Activated CD4-positive, alpha-beta T cell treated with anti-CD3 and anti-CD28 coated beads, Interleukin-2, amount 10 ng/mL, durations not matched to agents 7 days and 5 days (primary cell): ENCODE measurements at regions of chr12 and their contacts with region 1.

Region 1: GRCh38 chr12:121590476-121591143 is 9.8 kb upstream of the KDM2B start:
- DNase-seq: peak; percentile 79
- H3K4me3 Mint-ChIP-seq: peak overlapping the region; percentile 73
- H3K27ac Mint-ChIP-seq: peak overlapping the region; percentile 99
- H3K4me1 Mint-ChIP-seq: peaks cover 42% of the 10 kb centered on the region
- H3K27me3 Mint-ChIP-seq: no peaks in the 10 kb centered on the region

Region 2: DNA sequence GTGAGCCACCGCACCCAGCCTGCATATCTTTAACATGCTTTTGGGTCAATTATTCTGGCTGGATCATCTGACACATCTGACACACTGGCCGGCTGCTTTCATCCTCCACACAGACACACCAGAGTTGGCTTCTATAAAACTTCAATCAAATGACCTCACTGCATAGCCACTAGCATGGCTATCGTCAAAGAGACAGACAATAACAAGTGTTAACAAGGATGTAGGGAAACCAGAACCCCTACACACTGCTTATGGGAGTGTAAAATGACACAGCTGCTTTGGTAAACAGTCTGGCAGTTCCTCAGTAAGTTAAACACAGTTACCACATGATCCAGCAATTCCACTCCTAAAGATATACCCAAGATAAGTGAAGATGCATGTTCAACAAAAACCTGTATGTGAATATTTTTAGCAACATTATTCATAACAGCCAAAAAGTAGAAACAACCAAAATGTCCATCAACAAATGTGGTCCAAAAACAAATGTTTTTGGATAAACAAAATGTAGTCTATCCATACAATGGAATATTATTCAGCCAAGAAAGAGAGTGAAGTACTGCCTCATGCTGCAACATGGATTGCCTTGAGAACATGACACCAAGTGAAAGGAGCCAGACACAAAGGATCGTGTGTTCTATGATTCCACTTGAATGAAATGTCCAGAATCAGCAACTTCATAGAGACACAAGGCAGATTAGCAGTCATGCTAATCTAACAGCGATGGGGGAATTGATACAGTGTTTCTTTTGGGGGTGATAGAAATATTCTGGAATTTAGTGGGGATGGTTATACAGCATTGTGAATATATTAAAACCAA is 19.9 kb before region 1 on chr12:
- CTCF ChIA-PET with region 1: no interaction called
- POLR2A ChIA-PET with region 1: no interaction called
- DNase-seq: no peak
- H3K4me3 Mint-ChIP-seq: no peak overlapping the region
- H3K27ac Mint-ChIP-seq: no peak overlapping the region
- H3K4me1 Mint-ChIP-seq: peaks cover 12% of the 10 kb centered on the region
- H3K27me3 Mint-ChIP-seq: no peaks in the 10 kb centered on the region

Region 3: DNA sequence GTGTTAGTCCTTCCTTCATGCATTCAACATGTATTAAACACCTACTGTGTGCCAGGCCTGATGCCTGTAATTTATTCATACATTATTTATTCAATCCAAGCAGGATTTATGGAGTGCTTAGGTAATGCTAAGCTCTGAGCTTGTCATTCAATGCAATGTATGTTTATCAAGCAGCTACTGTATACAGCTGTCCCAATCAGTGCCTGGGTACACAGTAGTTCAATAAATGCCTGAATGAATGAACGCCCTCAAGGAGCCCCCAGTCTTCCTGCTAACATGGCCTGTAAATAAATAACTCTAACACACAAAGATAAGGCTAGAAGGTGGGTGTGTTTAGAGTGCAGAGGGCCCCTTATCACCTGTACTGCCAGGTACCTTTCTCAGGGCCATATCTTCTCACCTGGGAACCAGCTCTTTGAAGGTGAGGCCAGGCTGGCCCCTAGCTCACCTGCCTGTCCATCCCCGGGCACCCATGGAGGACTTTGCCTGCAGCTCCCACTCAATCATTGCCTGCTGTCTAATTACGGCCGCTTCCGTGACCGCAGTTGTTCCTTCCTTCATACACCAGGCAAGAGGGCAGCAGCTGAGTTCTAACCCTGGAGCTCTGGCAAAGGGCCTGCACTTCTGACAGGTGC is 10.2 kb after region 1 on chr12:
- CTCF ChIA-PET with region 1: interaction called, 12 read pairs
- POLR2A ChIA-PET with region 1: no interaction called
- DNase-seq: no peak
- H3K4me3 Mint-ChIP-seq: no peak overlapping the region
- H3K27ac Mint-ChIP-seq: no peak overlapping the region
- H3K4me1 Mint-ChIP-seq: peaks cover 6% of the 10 kb centered on the region
- H3K27me3 Mint-ChIP-seq: no peaks in the 10 kb centered on the region